Common myeloid progenitor, CD34-positive (primary cell): ENCODE measurements at regions of chr7 and their contacts with region 1.

Region 1: GRCh38 chr7:2886900-2887299 is 42.8 kb upstream of the GNA12 start:
- DNase-seq: peak; percentile 81 to 82 (median 82)
- H3K4me3 ChIP-seq: no peak overlapping the region
- H3K27ac ChIP-seq: no peak overlapping the region
- H3K4me1 ChIP-seq: peaks cover 0 to 21% (median 16%) of the 10 kb centered on the region in 4 experiments
- H3K27me3 ChIP-seq: no peaks in the 10 kb centered on the region

Region 2: DNA sequence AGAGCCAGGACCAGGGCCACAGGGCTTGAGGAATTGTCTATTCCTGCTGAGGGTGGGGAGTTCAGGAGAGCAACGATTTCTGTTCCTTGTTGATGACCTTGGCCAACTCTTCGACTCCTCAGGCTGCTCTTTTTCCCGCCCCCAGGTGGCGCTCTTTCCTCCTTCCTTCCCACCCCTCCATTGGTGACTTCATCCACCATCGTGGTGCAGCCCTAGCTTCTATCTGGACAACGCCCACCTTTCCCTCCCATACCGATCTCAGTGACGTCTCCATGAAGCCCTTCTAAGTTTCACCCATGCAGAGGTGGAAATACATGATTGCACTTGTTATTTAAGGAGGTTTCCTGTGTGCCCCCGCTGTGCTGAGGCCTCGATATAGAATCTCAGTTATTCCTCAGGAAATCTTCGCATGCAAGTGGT is 178.8 kb after region 1 on chr7:
- CTCF ChIA-PET with region 1: interaction called, 10 read pairs
- POLR2A ChIA-PET with region 1: no interaction called
- DNase-seq: peak; percentile 44 to 59 (median 54)
- H3K4me3 ChIP-seq: no peak overlapping the region
- H3K27ac ChIP-seq: no peak overlapping the region
- H3K4me1 ChIP-seq: peaks cover 0 to 30% (median 18%) of the 10 kb centered on the region in 4 experiments
- H3K27me3 ChIP-seq: no peaks in the 10 kb centered on the region

Region 3: DNA sequence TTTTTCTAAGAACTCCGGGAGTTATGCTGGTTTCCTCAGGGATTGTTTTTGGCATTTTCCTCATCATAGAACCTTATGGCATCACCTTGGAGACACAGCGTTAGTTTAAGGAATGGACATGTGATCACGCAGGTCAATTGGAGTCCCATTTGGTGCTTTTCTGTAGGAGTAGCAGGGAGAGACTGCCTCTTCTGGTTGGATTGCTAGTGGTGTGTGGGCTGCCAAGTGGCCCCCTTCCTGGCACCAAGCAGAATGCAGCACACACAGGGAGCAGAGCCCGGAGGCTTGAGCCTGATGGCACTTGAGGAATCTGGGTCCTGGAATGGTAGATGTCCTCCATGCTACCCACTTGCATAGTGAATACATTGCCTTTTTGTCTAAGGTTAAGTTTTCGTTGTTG is 472.1 kb after region 1 on chr7:
- CTCF ChIA-PET with region 1: no interaction called
- POLR2A ChIA-PET with region 1: no interaction called
- DNase-seq: no peak
- H3K4me3 ChIP-seq: no peak overlapping the region
- H3K27ac ChIP-seq: no peak overlapping the region
- H3K4me1 ChIP-seq: no peaks in the 10 kb centered on the region
- H3K27me3 ChIP-seq: peaks cover 0 to 2% (median 0%) of the 10 kb centered on the region in 5 experiments